ENCODE measurements at regions of chr17 and their contacts with region 1.

Region 1: DNA sequence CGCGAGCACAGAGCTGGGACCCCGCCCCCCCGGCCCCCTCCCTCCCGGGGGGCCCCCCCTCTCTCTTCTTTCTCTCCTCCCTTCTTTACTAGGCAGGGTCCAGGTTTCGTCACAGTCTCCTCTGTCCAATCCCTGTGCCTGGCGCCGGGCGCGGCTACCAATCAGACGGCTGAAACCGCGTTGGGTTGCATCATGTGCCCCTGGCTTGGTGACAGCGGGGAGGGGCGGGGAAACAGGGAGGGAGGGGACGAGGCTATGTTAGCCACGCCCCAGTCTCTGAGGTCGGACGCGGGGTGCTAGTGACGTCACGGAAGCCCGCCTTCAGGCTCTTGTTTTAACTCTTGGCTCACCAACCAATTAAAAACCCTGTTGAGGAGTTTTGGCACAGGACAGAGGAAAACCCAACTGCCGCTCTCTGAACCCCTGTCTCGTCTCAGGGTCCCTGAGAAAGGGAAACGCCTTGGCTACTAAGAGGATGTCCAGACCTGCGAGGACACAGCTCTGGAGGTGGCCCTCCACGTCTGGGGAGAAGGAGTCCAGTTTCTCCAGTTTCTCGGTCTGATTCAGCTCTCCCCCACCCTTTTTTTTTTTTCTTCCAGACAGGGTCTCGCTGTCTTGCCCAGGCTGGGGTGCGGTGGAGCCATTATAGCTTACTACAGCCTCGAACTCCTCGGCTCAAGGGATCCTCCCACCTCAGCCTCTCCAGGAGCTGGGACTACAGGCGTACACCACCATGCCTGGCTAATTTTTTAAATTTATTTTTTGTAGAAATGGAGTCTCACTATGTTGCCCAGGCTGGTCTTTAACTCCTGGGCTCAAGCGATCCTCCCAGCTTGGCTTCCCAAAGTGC is 439 bp upstream of the PLEKHH3 start:
- DNase-seq: peak; percentile 100
- H3K4me3 Mint-ChIP-seq: peak overlapping the region; percentile 88
- H3K27ac Mint-ChIP-seq: peak overlapping the region; percentile 41
- H3K4me1 Mint-ChIP-seq: peaks cover 51% of the 10 kb centered on the region
- H3K27me3 Mint-ChIP-seq: peaks cover 48% of the 10 kb centered on the region

Region 2: DNA sequence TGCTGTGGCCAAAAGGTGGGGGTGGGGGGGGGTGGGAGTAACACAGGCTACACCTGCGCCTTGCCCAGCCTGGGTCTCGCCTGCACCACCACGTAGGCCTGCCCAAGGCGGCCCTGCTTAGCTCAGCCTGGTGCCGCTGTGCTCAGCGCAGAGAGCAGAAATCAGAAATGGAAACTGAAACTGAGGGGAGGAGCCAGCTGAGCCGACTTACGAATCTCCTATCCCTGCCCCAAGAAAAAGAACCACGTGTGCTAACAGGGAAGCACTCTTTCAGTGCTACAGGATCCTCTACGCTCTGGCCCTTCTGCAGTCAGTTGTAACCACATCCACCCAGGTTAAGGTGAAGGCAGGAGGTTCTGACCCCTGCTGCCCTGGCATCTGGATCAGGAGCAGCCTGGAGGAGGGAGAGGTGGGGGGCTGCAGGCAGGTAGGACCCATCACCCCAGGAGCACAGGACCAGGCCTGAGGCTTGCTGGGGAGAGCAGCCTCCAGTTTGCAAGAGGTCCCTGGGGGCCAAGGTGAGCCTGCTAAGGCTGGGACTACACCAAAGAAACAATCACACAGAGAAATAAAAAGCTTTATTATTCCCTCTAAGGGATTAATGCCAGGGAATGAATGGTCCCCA is 564.6 kb before region 1 on chr17 and contains the start of gene DHX58:
- CTCF ChIA-PET with region 1: no interaction called
- intact Hi-C with region 1: loop called (anchors 5 kb)
- DNase-seq: peak; percentile 90
- H3K4me3 Mint-ChIP-seq: peak within 1 kb of the TSS; percentile 81
- H3K27ac Mint-ChIP-seq: peak within 1 kb of the TSS; percentile 92
- H3K4me1 Mint-ChIP-seq: peaks cover 38% of the 10 kb centered on the region
- H3K27me3 Mint-ChIP-seq: no peaks in the 10 kb centered on the region
- total RNA-seq, gene DHX58: 44.4 to 46.3 TPM

Region 3: GRCh38 chr17:42347198-42347597 is 330.0 kb before region 1 on chr17:
- CTCF ChIA-PET with region 1: no interaction called
- intact Hi-C with region 1: loop called (anchors 10 kb)
- DNase-seq: no peak
- H3K4me3 Mint-ChIP-seq: no peak overlapping the region
- H3K27ac Mint-ChIP-seq: no peak overlapping the region
- H3K4me1 Mint-ChIP-seq: peaks cover 51% of the 10 kb centered on the region
- H3K27me3 Mint-ChIP-seq: no peaks in the 10 kb centered on the region

Region 4: GRCh38 chr17:42463976-42464400 is 213.2 kb before region 1 on chr17:
- CTCF ChIA-PET with region 1: no interaction called
- intact Hi-C with region 1: no loop called
- DNase-seq: no peak
- H3K4me3 Mint-ChIP-seq: no peak overlapping the region
- H3K27ac Mint-ChIP-seq: no peak overlapping the region
- H3K4me1 Mint-ChIP-seq: peaks cover 19% of the 10 kb centered on the region
- H3K27me3 Mint-ChIP-seq: no peaks in the 10 kb centered on the region

Region 5: DNA sequence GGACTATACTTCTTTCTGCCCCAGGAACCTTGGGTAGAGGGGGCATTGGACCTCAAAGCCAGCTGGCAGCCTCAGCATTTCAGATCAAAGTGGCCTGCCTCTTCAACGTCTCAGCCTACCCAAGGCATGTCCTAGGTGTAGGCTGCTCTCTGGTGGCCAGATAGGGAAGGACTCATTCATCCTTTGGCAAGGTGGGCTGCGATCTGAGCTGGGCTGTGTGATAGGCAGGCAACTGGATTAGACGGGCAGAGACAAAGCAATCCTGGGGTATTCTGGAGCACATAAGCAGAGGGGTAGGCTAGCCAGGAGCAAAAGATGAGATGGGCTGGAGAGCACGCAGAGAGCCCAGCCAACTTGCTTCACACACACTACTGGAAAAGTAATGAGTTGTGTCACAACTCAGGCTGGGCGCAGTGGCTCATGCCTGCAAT is 149.9 kb before region 1 on chr17:
- CTCF ChIA-PET with region 1: no interaction called
- intact Hi-C with region 1: loop called (anchors 5 kb)
- DNase-seq: peak; percentile 86
- H3K4me3 Mint-ChIP-seq: no peak overlapping the region
- H3K27ac Mint-ChIP-seq: no peak overlapping the region
- H3K4me1 Mint-ChIP-seq: peaks cover 32% of the 10 kb centered on the region
- H3K27me3 Mint-ChIP-seq: no peaks in the 10 kb centered on the region

Region 6: DNA sequence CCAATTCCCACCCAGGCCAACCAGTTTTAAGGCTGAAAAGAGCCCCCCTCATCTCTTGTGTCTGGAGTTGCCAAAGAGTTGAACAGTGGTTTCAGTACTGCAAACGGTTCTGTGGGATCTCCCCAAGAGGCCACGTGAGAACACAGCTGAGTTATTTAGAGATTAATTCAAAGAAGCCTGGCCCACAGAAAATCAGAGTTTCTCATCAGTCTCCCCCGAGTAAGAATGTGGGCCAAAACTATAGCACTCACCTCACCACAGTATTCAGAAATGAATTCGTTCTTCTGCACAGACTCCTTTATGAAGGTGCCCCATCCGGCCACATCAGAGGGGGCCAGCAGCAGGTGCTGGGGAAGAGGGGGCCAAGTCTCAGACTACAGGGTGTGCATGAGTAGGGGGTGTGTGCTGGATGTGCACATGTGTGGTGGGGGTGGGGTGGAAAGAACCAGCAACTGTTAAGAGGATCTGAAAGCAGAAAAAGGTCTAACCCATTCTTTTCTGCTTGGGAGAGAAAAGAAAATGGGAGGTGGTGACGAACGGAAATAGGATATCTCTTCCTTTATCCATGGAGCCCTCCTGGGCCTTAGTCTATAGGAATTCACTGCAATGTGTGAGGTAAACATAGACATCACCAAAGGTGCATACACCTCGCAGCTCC is 27.7 kb after region 1 on chr17:
- CTCF ChIA-PET with region 1: interaction called, 3 read pairs
- intact Hi-C with region 1: loop called (anchors 2 kb)
- DNase-seq: peak; percentile 83
- H3K4me3 Mint-ChIP-seq: no peak overlapping the region
- H3K27ac Mint-ChIP-seq: no peak overlapping the region
- H3K4me1 Mint-ChIP-seq: peaks cover 29% of the 10 kb centered on the region
- H3K27me3 Mint-ChIP-seq: no peaks in the 10 kb centered on the region

Region 7: GRCh38 chr17:42819944-42820535 is 142.8 kb after region 1 on chr17:
- CTCF ChIA-PET with region 1: no interaction called
- intact Hi-C with region 1: loop called (anchors 1 kb)
- DNase-seq: peak; percentile 82
- H3K4me3 Mint-ChIP-seq: no peak overlapping the region
- H3K27ac Mint-ChIP-seq: no peak overlapping the region
- H3K4me1 Mint-ChIP-seq: peaks cover 32% of the 10 kb centered on the region
- H3K27me3 Mint-ChIP-seq: no peaks in the 10 kb centered on the region

Measured in activated naive CD4-positive, alpha-beta T cell treated with anti-CD3 and anti-CD28 coated beads for 36 hours (primary cell).